Heart left ventricle (tissue), 16 donors: ENCODE measurements at regions of chr14 and their contacts with region 1.

Region 1: DNA sequence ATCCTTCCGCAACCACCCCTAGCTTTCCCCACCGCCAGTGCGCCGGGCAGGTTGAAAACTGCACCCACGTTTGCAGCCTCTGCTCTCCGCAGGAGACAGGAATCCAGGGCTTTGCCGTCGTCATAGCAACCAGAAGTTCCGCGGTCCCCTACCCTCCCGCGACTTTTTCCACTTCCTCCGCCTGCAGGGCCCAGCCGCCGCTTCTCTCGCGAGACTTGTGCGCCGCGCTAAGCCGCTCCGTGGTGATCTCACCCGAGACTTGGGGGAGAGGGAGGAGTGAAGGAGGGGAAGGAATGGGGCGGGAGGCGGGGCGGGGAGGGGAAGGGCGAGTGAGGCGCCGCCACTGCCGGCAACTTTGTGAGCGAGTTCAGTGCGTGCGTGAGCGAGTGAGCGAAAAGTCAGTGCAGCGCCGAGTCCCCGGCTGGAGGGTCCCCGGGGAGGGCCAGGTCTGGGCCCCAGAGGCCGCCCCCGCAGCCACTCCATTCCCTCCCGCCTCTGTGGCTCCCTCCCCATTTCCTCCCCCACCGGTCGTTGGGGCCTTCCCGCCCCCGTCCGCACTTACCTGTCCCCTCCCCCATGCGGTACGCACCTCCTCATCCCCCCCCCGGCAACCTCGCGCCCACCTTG is 413.0 kb downstream of the PCNX1 start:
- DNase-seq: peak; percentile 98 to 100 (median 99)
- ATAC-seq: peak; percentile 98 to 99 (median 98)
- H3K4me3 ChIP-seq: peak within 1 kb of the TSS; percentile 68 to 96 (median 90)
- H3K27ac ChIP-seq: peak within 1 kb of the TSS; percentile 82 to 99 (median 92)
- H3K4me1 ChIP-seq: peaks cover 0 to 34% (median 12%) of the 10 kb centered on the region in 12 donors
- H3K27me3 ChIP-seq: no peaks in the 10 kb centered on the region
- CTCF ChIP-seq: peak in 2 of 12 donors; percentile 7 to 10
- POLR2A ChIP-seq: peak in 1 of 2 donors; percentile 85

Region 2: DNA sequence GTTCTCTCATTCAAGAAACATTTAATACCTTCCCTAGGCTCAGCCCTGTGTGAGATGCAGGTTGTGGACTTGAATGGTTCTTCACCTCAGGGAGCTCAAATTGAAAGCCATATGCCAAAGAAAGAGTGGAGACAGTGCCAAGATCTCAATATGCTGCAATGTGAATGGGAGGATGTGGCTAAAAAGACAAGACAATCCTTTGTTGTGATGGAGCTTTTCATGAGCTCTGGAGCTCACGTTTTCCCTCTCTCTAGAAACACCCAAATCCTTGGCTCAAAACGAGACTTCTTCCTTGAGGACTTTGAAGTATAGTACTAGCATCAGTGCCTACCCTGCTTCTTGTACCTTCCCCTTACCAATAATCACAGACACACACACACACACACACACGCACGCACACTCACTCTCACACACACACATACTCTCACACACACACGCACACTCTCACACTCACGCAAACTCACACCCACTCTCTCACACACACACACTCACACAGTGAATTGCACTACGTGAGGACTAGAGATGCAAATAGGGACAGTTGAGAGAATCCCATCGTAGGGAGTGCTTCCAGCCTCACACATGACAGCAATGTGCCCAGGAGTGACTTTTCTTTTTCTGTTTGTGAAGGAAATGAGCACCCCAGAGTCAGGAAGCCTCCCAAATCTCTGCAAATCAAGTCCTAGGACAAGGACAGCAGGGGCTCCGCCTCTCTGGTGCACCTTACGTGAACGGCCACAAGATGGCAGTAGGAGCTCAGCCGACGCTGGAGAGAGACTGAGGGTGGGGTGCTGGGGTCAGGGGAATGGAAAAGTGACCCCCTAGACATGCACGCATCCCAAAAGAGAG is 181.5 kb before region 1 on chr14:
- intact Hi-C with region 1: loop called in 5 of 10 experiments (anchors 2 to 10 kb)
- DNase-seq: peak; percentile 36 to 77 (median 47)
- ATAC-seq: peak; percentile 55 to 85 (median 72)
- H3K4me3 ChIP-seq: peak overlapping the region in 2 of 12 donors; percentile 7 to 28
- H3K27ac ChIP-seq: no peak overlapping the region
- H3K4me1 ChIP-seq: peaks cover 0 to 31% (median 0%) of the 10 kb centered on the region in 12 donors
- H3K27me3 ChIP-seq: no peaks in the 10 kb centered on the region
- CTCF ChIP-seq: peak; percentile 88 to 95 (median 92)
- POLR2A ChIP-seq: no peak

Region 3: GRCh38 chr14:71166180-71166790 is 153.9 kb before region 1 on chr14:
- intact Hi-C with region 1: loop called in 1 of 10 experiments (anchors 10 kb)
- DNase-seq: no peak
- ATAC-seq: peak in 1 of 4 donors; percentile 44
- H3K4me3 ChIP-seq: no peak overlapping the region
- H3K27ac ChIP-seq: no peak overlapping the region
- H3K4me1 ChIP-seq: peaks cover 0 to 15% (median 1%) of the 10 kb centered on the region in 12 donors
- H3K27me3 ChIP-seq: peaks cover 0 to 4% (median 0%) of the 10 kb centered on the region in 9 donors
- CTCF ChIP-seq: peak in 8 of 12 donors; percentile 24 to 64 (median 46)
- POLR2A ChIP-seq: no peak

Region 4: DNA sequence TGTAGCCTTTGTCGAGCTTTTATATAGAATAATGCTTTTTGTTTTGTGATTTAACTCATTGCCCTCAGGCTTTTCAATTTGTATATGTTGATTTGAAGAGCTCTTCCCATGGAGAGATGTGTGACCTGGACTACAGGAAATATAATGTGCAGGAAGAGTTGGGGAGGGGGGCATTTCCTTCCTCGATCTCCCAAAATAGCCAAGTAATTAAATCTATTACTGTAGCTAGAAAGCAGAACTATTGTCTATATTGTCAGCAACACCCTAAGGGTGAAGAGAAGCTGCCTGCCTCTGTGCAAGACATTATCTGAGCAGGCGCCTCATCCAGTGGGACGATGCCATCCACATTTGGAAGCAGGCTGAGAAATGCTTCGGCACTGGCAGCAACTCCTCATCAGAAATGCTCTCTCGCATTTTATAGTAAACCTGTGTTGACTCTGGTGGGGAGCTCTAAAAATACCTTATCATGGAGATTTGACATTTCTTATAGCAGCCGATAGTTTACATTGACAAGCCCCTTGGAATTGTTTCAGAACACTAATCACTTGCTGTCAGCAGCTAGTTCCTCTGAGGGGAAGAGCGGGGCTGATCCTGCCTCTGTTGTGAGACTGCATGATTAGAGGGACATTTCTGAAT is 219.5 kb after region 1 on chr14:
- intact Hi-C with region 1: loop called in 1 of 10 experiments (anchors 5 kb)
- DNase-seq: peak in 1 of 5 donors; percentile 35
- ATAC-seq: peak; percentile 67 to 79 (median 74)
- H3K4me3 ChIP-seq: peak overlapping the region in 5 of 12 donors; percentile 1 to 27 (median 20)
- H3K27ac ChIP-seq: peak overlapping the region in 7 of 12 donors; percentile 1 to 65 (median 21)
- H3K4me1 ChIP-seq: peaks cover 0 to 46% (median 22%) of the 10 kb centered on the region in 12 donors
- H3K27me3 ChIP-seq: no peaks in the 10 kb centered on the region
- CTCF ChIP-seq: no peak
- POLR2A ChIP-seq: no peak

Region 5: GRCh38 chr14:71720978-71721624 is 400.9 kb after region 1 on chr14:
- intact Hi-C with region 1: loop called in 1 of 10 experiments (anchors 10 kb)
- DNase-seq: peak in 3 of 5 donors; percentile 33 to 42 (median 41)
- ATAC-seq: peak; percentile 67 to 91 (median 82)
- H3K4me3 ChIP-seq: no peak overlapping the region
- H3K27ac ChIP-seq: no peak overlapping the region
- H3K4me1 ChIP-seq: no peaks in the 10 kb centered on the region
- H3K27me3 ChIP-seq: no peaks in the 10 kb centered on the region
- CTCF ChIP-seq: peak; percentile 37 to 68 (median 57)
- POLR2A ChIP-seq: no peak